OCI-LY7 (cell line): ENCODE measurements at regions of chr10 and their contacts with region 1.

Region 1: DNA sequence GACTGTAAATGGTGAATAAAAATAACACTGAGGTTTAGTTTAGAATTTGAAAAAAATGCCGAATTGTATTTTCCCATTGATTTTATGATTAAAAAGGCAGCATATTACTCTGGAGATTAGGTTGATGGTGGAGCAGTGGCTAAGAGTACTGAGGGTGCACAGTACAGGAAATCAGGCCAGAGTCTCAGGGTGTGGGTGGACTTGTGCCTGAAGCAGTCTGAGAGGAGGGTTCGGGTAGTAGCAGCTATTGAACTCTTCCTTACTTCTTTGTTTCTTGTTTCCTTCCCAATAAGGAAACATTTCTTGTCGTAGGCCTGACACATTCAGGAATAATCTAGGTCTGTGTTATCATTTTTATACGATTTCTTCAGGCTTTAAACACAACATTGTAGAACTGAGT is 319.0 kb upstream of the MBL2 start:
- DNase-seq: no peak
- H3K4me3 ChIP-seq: no peak overlapping the region
- H3K27ac ChIP-seq: no peak overlapping the region
- H3K4me1 ChIP-seq: no peaks in the 10 kb centered on the region
- CTCF ChIP-seq: no peak

Region 2: DNA sequence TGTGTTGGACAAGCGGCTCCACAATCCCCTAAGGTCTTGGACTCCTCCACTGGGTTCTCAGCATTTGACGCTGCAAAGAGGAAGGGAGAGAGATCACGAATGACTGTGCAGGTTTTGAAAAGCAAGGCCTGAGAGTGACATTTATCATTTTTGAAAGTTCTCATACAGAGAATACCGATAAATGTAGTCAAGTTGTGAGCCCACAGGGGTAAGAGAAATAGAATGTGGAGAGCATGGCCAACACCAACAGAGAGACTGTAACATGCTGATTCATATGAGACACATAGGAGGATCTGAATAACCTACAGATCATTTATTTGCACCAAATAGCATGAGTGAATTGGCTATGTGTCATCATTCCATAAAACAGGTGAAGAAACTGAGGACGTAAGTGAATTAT is 88.5 kb before region 1 on chr10:
- CTCF ChIA-PET with region 1: no interaction called
- POLR2A ChIA-PET with region 1: no interaction called
- intact Hi-C with region 1: no loop called
- DNase-seq: no peak
- H3K4me3 ChIP-seq: no peak overlapping the region
- H3K27ac ChIP-seq: no peak overlapping the region
- H3K4me1 ChIP-seq: no peaks in the 10 kb centered on the region
- CTCF ChIP-seq: no peak

Region 3: DNA sequence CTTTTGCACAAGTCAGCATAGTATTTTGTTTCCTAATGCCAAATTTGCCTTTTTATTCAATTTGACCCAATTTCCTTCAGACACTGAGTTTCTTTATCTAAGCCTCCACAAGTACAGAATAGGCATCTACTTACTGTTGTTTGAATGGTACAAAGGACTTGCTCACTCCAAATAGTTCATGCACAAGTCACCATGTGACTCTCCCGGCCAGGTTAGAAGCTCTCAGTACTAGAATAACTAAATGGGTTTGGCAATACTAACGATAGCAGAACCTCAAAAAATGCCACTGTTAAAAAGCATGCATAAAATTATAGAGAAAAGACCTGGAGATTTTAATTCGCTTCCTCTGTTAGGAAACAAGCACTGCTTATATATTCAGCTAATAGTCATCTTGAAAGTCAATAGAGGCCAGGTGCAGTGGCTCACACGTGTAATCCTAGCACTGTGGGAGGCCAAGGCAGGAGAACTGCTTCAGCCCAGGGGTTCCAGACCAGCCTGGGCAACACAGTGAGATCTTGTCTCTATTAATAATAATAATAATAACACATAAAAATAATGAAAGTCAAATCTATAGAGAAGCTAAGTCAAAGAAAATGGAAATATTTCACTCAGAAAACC is 16.9 kb after region 1 on chr10:
- CTCF ChIA-PET with region 1: no interaction called
- POLR2A ChIA-PET with region 1: interaction called, 6 read pairs
- intact Hi-C with region 1: loop called (anchors 1 kb)
- DNase-seq: no peak
- H3K4me3 ChIP-seq: no peak overlapping the region
- H3K27ac ChIP-seq: no peak overlapping the region
- H3K4me1 ChIP-seq: no peaks in the 10 kb centered on the region
- CTCF ChIP-seq: no peak

Region 4: DNA sequence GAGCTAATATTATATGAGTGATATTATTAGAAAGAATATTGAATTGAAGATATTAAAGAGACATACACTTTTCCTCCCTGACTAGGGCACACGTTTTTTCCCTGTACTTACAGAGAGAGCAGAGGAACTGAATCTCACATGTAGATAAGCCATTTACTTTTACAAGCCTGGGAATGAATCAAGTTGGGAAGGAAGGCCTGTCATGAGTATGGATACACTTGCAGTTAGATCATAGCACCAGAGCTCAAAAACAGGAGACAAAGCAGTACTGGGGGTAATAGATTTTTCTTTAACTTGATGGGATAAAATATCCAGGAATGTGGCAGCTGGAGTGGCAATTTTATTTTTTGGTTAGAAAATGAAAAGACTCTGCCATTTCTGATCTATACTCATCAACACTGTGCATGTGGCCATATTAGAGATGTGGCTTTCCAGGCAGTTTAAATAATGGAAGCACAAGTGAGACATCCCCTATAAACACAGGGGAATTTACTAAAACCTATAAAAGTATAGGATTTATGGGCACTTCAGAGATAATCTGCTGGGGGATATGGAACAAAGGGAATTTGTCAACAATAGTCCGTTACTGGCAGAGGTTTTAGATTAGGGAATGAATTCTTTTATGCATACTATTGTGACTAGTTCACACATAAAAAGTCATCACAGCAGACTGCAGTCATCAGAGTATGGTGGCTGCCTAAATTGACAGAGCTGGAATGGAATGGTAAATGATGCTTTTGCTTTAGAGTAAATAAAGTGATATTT is 338.7 kb after region 1 on chr10:
- CTCF ChIA-PET with region 1: no interaction called
- POLR2A ChIA-PET with region 1: no interaction called
- intact Hi-C with region 1: no loop called
- DNase-seq: no peak
- H3K4me3 ChIP-seq: no peak overlapping the region
- H3K27ac ChIP-seq: no peak overlapping the region
- H3K4me1 ChIP-seq: no peaks in the 10 kb centered on the region
- CTCF ChIP-seq: no peak